GM12878 (cell line): ENCODE measurements at regions of chr17 and their contacts with region 1.

Region 1: DNA sequence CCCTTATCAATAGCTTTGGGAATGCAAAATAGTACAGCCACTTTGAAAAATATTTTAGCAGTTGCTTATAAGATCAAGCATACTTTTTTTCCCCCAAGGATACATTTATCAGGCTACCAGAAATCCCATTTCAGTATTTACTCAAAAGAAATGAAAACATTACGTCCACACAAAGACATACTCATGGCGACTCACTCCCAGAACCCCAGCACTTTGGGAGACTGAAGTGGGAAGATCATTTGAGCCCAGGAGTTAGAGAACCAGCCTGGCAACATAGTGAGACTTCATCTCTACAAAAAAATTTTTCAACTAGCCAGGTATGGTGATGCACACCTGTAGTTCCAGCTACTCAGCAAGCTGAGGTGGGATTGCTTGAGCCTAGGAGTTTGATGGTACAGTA is 5.9 kb downstream of the SKA2 start:
- DNase-seq: no peak
- ATAC-seq: no peak
- H3K4me3 ChIP-seq: 0 out of 2 replicates have a peak overlapping the region, but pooled peaks have one; percentile 3
- H3K27ac ChIP-seq: no peak overlapping the region
- H3K4me1 ChIP-seq: peaks cover 3% of the 10 kb centered on the region; the same call in 1 of the 2 replicates
- H3K27me3 ChIP-seq: no peaks in the 10 kb centered on the region
- CTCF ChIP-seq: no peak
- EP300 ChIP-seq: no peak
- POLR2A ChIP-seq: no peak
- RAD21 ChIP-seq: no peak

Region 2: GRCh38 chr17:59074494-59074893 is 74.6 kb before region 1 on chr17:
- CTCF ChIA-PET with region 1: no interaction called
- POLR2A ChIA-PET with region 1: no interaction called
- RAD21 ChIA-PET with region 1: no interaction called
- SMC1A ChIA-PET with region 1: no interaction called
- in situ Hi-C with region 1: no loop called
- intact Hi-C with region 1: no loop called
- DNase-seq: no peak
- ATAC-seq: no peak
- H3K4me3 ChIP-seq: no peak overlapping the region
- H3K27ac ChIP-seq: no peak overlapping the region
- H3K4me1 ChIP-seq: no peaks in the 10 kb centered on the region
- H3K27me3 ChIP-seq: no peaks in the 10 kb centered on the region
- CTCF ChIP-seq: no peak
- EP300 ChIP-seq: no peak
- POLR2A ChIP-seq: no peak
- RAD21 ChIP-seq: no peak

Region 3: GRCh38 chr17:59165902-59166342 is 16.9 kb after region 1 on chr17:
- CTCF ChIA-PET with region 1: interaction called, 15 read pairs
- POLR2A ChIA-PET with region 1: interaction called, 9 read pairs
- RAD21 ChIA-PET with region 1: interaction called, 4 read pairs
- SMC1A ChIA-PET with region 1: interaction called, 7 read pairs
- in situ Hi-C with region 1: no loop called
- intact Hi-C with region 1: no loop called
- DNase-seq: peak; percentile 57
- ATAC-seq: peak; percentile 97
- H3K4me3 ChIP-seq: no peak overlapping the region
- H3K27ac ChIP-seq: peak overlapping the region; percentile 51
- H3K4me1 ChIP-seq: peaks cover 5% of the 10 kb centered on the region
- H3K27me3 ChIP-seq: no peaks in the 10 kb centered on the region
- CTCF ChIP-seq: peak; percentile 63 to 80 (median 72)
- EP300 ChIP-seq: no peak
- POLR2A ChIP-seq: no peak
- RAD21 ChIP-seq: peak; percentile 45